B cell (primary cell): ENCODE measurements at regions of chr17 and their contacts with region 1.

Region 1: DNA sequence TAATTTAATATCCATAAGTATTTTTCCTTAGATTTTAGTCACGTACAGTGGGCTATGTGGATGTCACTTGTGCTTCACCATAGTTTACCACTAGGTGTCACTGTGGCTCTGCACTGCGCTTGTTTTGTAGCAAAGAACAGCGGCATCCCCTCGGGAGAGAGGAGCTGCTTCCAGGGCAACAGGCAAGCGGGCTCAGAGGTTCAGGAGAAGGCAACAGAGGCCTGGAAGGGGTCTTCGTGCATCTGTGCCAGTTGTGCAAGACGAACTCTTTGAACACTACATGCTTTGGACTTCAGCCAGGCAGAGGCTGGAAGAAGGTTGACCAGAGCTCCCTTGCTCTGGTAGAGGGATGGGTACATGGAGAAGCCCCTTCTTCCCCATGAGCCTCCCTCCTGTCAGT is 20.6 kb downstream of the CYB561 start:
- DNase-seq: peak; percentile 82
- ATAC-seq: peak; percentile 81
- H3K4me3 ChIP-seq: no peak overlapping the region
- H3K4me3 Mint-ChIP-seq: no peak overlapping the region
- H3K27ac ChIP-seq: no peak overlapping the region
- H3K27ac Mint-ChIP-seq: no peak overlapping the region
- H3K4me1 ChIP-seq: peaks cover 0 to 5% of the 10 kb centered on the region in 2 donors
- H3K4me1 Mint-ChIP-seq: peaks cover 12% of the 10 kb centered on the region
- H3K27me3 ChIP-seq: no peaks in the 10 kb centered on the region
- H3K27me3 Mint-ChIP-seq: peaks cover 10% of the 10 kb centered on the region
- CTCF ChIP-seq: peak; percentile 100

Region 2: GRCh38 chr17:63395075-63395805 is 30.2 kb before region 1 on chr17:
- CTCF ChIA-PET with region 1: no interaction called
- POLR2A ChIA-PET with region 1: no interaction called
- intact Hi-C with region 1: no loop called
- DNase-seq: no peak
- ATAC-seq: no peak
- H3K4me3 ChIP-seq: no peak overlapping the region
- H3K4me3 Mint-ChIP-seq: no peak overlapping the region
- H3K27ac ChIP-seq: no peak overlapping the region
- H3K27ac Mint-ChIP-seq: no peak overlapping the region
- H3K4me1 ChIP-seq: peaks cover 13 to 14% of the 10 kb centered on the region in 2 donors
- H3K4me1 Mint-ChIP-seq: peaks cover 18% of the 10 kb centered on the region
- H3K27me3 ChIP-seq: no peaks in the 10 kb centered on the region
- H3K27me3 Mint-ChIP-seq: no peaks in the 10 kb centered on the region
- CTCF ChIP-seq: no peak

Region 3: DNA sequence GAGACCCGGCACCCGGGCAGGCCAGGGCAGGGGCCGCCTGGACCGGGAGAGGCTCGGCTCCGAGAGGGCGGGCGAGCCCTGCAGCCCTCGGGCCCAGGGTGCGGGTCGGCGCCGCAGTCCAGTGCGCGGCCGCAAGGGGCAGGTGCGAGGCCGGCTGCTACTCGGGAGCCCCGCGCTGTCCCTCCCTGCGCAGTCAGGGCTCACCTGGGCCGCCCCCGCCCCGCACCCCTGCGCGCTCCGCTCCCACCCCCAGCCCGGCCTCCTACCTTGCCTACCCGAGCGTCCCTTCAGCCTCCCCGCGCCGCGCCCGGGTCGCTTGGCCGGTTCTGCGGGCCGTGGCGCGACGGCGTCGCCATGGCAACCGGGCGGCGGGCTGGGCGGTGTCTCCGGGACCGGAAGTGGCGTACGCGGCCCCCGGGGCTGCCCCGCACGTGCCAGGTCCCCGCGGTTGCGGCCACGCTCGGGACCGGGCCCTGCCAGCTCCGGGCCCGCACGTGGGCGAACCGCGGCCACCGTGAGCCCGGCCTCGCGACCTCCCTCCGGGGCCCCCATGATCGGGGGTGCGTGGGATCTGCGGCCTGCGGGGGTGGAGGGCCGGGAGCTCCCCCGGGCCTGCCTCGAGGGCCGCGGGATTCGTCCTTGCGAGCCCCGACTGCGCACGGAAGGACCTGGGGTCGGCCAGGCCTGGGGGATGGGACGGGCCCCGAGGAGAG is 20.7 kb after region 1 on chr17 and contains the start of gene CYB561:
- CTCF ChIA-PET with region 1: interaction called, 26 read pairs
- POLR2A ChIA-PET with region 1: no interaction called
- intact Hi-C with region 1: no loop called
- DNase-seq: peak; percentile 94
- ATAC-seq: peak; percentile 73
- H3K4me3 ChIP-seq: peak within 1 kb of the TSS in 4 of 5 experiments; percentile 54 to 70 (median 61)
- H3K4me3 Mint-ChIP-seq: peak within 1 kb of the TSS; percentile 77
- H3K27ac ChIP-seq: peak within 1 kb of the TSS; percentile 38 to 79
- H3K27ac Mint-ChIP-seq: peak within 1 kb of the TSS; percentile 81
- H3K4me1 ChIP-seq: peaks cover 13 to 24% of the 10 kb centered on the region in 2 donors
- H3K4me1 Mint-ChIP-seq: peaks cover 15% of the 10 kb centered on the region
- H3K27me3 ChIP-seq: peaks cover 0 to 2% (median 0%) of the 10 kb centered on the region in 4 experiments
- H3K27me3 Mint-ChIP-seq: peaks cover 6% of the 10 kb centered on the region
- CTCF ChIP-seq: peak; percentile 59
- total RNA-seq, gene CYB561: 3.6 and 4.9 TPM in 2 replicates

Region 4: GRCh38 chr17:63478791-63479494 is 53.5 kb after region 1 on chr17:
- CTCF ChIA-PET with region 1: interaction called, 158 read pairs
- POLR2A ChIA-PET with region 1: no interaction called
- intact Hi-C with region 1: no loop called
- DNase-seq: peak; percentile 81
- ATAC-seq: peak; percentile 79
- H3K4me3 ChIP-seq: no peak overlapping the region
- H3K4me3 Mint-ChIP-seq: peak overlapping the region; percentile 71
- H3K27ac ChIP-seq: no peak overlapping the region
- H3K27ac Mint-ChIP-seq: no peak overlapping the region
- H3K4me1 ChIP-seq: peaks cover 20% of the 10 kb centered on the region in 2 donors
- H3K4me1 Mint-ChIP-seq: peaks cover 24% of the 10 kb centered on the region
- H3K27me3 ChIP-seq: peaks cover 0 to 46% (median 13%) of the 10 kb centered on the region in 4 experiments
- H3K27me3 Mint-ChIP-seq: peaks cover 35% of the 10 kb centered on the region
- CTCF ChIP-seq: peak; percentile 78

Region 5: DNA sequence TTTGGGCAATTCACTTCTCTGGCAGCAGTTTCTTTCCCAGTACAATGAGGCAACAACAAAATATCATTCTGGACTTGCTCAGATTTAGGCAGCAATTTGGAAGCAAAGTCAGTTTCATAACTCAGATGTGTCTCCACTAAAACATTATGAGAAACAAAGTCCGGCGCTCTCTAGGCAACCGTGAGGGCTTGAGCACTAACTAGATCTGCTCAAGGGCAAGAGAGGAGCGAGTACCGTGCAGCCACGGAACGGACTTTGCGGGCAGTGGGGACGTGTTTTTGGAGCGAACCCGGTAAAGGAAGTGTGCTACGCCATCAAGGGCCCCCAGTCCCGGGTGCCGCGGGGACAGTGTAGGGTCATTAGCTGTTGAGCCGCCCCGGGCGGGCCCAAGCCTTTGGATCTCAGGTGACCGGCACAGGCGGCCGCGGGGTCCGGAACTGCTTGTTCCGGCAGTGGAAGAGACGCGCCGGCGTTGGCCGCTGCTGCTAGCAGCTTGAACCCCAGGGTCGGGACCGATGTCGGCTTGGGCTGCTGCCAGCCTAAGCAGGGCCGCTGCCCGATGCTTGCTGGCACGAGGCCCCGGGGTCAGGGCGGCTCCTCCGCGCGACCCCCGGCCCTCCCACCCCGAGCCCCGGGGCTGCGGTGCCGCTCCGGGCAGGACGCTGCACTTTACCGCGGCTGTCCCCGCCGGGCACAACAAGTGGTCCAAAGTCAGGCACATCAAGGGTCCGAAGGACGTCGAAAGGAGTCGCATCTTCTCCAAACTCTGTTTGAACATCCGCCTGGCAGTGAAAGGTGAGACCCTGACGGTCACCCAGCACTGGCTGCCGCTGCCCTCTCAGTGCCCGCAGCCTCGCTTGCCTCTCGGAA is 175.3 kb after region 1 on chr17 and contains the start of gene TACO1:
- CTCF ChIA-PET with region 1: interaction called, 11 read pairs
- POLR2A ChIA-PET with region 1: no interaction called
- intact Hi-C with region 1: no loop called
- DNase-seq: peak; percentile 87
- ATAC-seq: peak; percentile 97
- H3K4me3 ChIP-seq: peak within 1 kb of the TSS; percentile 67 to 97 (median 91)
- H3K4me3 Mint-ChIP-seq: peak within 1 kb of the TSS; percentile 95
- H3K27ac ChIP-seq: peak within 1 kb of the TSS; percentile 39 to 88
- H3K27ac Mint-ChIP-seq: peak within 1 kb of the TSS; percentile 93
- H3K4me1 ChIP-seq: peaks cover 15 to 19% of the 10 kb centered on the region in 2 donors
- H3K4me1 Mint-ChIP-seq: peaks cover 21% of the 10 kb centered on the region
- H3K27me3 ChIP-seq: no peaks in the 10 kb centered on the region
- H3K27me3 Mint-ChIP-seq: no peaks in the 10 kb centered on the region
- CTCF ChIP-seq: no peak
- total RNA-seq, gene TACO1: 15.9 and 17.2 TPM in 2 replicates

Region 6: GRCh38 chr17:63707151-63707550 is 281.7 kb after region 1 on chr17:
- CTCF ChIA-PET with region 1: interaction called, 53 read pairs
- POLR2A ChIA-PET with region 1: no interaction called
- intact Hi-C with region 1: loop called (anchors 1 kb)
- DNase-seq: no peak
- ATAC-seq: no peak
- H3K4me3 ChIP-seq: no peak overlapping the region
- H3K4me3 Mint-ChIP-seq: no peak overlapping the region
- H3K27ac ChIP-seq: peak overlapping the region in 1 of 2 donors; percentile 75
- H3K27ac Mint-ChIP-seq: peak overlapping the region; percentile 92
- H3K4me1 ChIP-seq: peaks cover 51 to 56% of the 10 kb centered on the region in 2 donors
- H3K4me1 Mint-ChIP-seq: peaks cover 67% of the 10 kb centered on the region
- H3K27me3 ChIP-seq: no peaks in the 10 kb centered on the region
- H3K27me3 Mint-ChIP-seq: no peaks in the 10 kb centered on the region
- CTCF ChIP-seq: no peak

Region 7: GRCh38 chr17:63714547-63715277 is 289.2 kb after region 1 on chr17:
- CTCF ChIA-PET with region 1: interaction called, 53 read pairs
- POLR2A ChIA-PET with region 1: no interaction called
- intact Hi-C with region 1: loop called (anchors 1 kb)
- DNase-seq: no peak
- ATAC-seq: no peak
- H3K4me3 ChIP-seq: no peak overlapping the region
- H3K4me3 Mint-ChIP-seq: no peak overlapping the region
- H3K27ac ChIP-seq: no peak overlapping the region
- H3K27ac Mint-ChIP-seq: no peak overlapping the region
- H3K4me1 ChIP-seq: peaks cover 6 to 8% of the 10 kb centered on the region in 2 donors
- H3K4me1 Mint-ChIP-seq: peaks cover 8% of the 10 kb centered on the region
- H3K27me3 ChIP-seq: no peaks in the 10 kb centered on the region
- H3K27me3 Mint-ChIP-seq: no peaks in the 10 kb centered on the region
- CTCF ChIP-seq: no peak

Region 8: GRCh38 chr17:63834431-63835166 is 409.1 kb after region 1 on chr17:
- CTCF ChIA-PET with region 1: interaction called, 15 read pairs
- POLR2A ChIA-PET with region 1: no interaction called
- intact Hi-C with region 1: loop called (anchors 5 kb)
- DNase-seq: peak; percentile 77
- ATAC-seq: peak; percentile 86
- H3K4me3 ChIP-seq: no peak overlapping the region
- H3K4me3 Mint-ChIP-seq: no peak overlapping the region
- H3K27ac ChIP-seq: peak overlapping the region in 1 of 2 donors; percentile 13
- H3K27ac Mint-ChIP-seq: peak overlapping the region; percentile 72
- H3K4me1 ChIP-seq: peaks cover 26 to 36% of the 10 kb centered on the region in 2 donors
- H3K4me1 Mint-ChIP-seq: peaks cover 45% of the 10 kb centered on the region
- H3K27me3 ChIP-seq: no peaks in the 10 kb centered on the region
- H3K27me3 Mint-ChIP-seq: no peaks in the 10 kb centered on the region
- CTCF ChIP-seq: peak; percentile 73